ENCODE measurements at regions of chr1 and their contacts with region 1.

Region 1: GRCh38 chr1:87348341-87348999 is 19.8 kb downstream of the LMO4 start:
- DNase-seq: no peak
- H3K4me3 ChIP-seq: no peak overlapping the region
- H3K27ac ChIP-seq: no peak overlapping the region
- H3K4me1 ChIP-seq: no peaks in the 10 kb centered on the region
- H3K27me3 ChIP-seq: no peaks in the 10 kb centered on the region
- CTCF ChIP-seq: no peak

Region 2: DNA sequence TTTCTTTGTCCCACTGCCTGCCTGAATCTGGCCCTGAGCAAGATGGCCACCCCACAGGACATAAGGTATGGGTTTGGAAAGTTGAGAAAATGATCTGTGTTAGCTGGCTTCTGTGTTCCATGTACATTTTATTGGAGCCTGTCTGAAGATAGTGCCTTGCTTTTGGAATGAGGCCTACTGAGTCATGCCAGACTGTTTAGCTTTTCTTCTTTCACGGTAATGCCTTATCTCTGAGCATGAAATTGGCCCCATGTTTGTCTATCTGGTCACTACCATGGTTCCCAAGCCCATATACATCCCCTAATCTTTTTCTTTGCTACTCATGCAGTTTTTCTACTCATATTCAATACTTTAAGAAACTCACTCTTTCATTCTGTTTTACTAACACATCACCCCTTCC is 104.9 kb before region 1 on chr1:
- CTCF ChIA-PET with region 1: no interaction called
- POLR2A ChIA-PET with region 1: no interaction called
- intact Hi-C with region 1: no loop called
- DNase-seq: no peak
- H3K4me3 ChIP-seq: no peak overlapping the region
- H3K27ac ChIP-seq: no peak overlapping the region
- H3K4me1 ChIP-seq: peaks cover 16% of the 10 kb centered on the region
- H3K27me3 ChIP-seq: no peaks in the 10 kb centered on the region
- CTCF ChIP-seq: no peak

Region 3: DNA sequence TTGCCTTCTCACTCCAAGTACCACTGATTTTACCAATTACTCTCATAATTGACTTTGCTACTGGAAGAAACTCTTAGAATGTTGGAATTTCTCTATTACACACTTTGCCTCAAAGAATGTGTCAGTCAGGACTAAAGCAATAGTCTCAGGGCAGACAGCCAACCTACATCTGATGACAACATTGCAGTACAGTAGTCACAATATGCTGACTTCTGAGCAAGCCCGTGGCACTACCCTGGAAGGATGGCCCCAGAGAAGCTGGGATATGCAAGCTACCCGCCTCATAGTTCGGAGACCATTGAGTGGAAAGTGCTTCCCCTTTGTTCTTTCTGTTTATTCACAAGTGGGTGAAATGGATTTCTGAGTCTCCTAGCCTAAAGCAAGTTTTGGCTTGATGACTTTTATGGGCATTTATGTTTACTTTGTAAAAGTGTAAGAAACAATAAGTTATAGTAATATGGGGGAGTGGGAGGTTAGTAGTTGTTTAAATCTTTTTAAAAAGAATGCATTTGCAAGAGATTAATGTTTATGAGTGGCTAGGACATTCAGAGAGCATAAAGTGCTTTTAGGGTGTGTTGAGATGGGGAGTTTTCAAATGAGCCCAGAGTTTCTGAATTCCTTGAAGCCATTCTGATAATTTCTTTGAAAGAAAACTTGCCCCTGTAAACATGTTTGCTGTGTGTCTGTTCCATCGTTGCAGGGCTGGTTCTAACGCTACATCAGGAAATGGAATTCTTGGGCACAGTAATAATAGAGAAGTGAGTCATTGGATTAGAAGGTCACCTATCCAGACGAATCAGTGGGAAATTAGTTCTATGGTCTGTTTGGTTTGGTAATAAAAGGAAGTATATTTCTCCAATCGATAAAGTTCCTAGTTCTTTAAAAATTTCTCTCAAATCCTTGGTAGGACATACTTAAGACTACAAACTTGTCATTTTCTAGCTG is 44.0 kb after region 1 on chr1:
- CTCF ChIA-PET with region 1: no interaction called
- POLR2A ChIA-PET with region 1: no interaction called
- intact Hi-C with region 1: loop called (anchors 5 kb)
- DNase-seq: peak; percentile 27 to 91
- H3K4me3 ChIP-seq: peak overlapping the region; percentile 11; the same call in 1 of the 2 replicates
- H3K27ac ChIP-seq: peak overlapping the region; percentile 50
- H3K4me1 ChIP-seq: peaks cover 24% of the 10 kb centered on the region
- H3K27me3 ChIP-seq: no peaks in the 10 kb centered on the region
- CTCF ChIP-seq: no peak

Region 4: DNA sequence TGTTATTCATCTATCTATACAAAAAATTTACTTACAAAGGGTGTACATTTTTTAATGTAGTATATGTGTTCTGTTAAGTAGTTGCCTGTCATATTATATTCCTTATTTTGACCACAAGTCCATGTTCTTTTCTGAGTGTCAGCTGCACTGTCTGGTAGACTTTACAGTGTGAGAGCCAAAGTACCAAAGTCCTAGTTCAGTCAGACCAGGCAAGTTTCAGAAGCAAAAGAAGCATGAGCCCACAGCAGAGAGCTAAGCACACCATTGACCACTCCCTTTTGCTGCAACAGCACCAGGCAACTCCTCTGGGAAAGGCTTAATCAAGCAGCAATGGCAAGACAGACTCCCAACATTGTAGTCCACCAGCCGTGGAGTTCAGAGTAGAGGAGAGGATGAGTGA is 703.7 kb after region 1 on chr1:
- CTCF ChIA-PET with region 1: no interaction called
- POLR2A ChIA-PET with region 1: no interaction called
- intact Hi-C with region 1: no loop called
- DNase-seq: no peak
- H3K4me3 ChIP-seq: no peak overlapping the region
- H3K27ac ChIP-seq: no peak overlapping the region
- H3K4me1 ChIP-seq: no peaks in the 10 kb centered on the region
- H3K27me3 ChIP-seq: no peaks in the 10 kb centered on the region
- CTCF ChIP-seq: no peak

Measured in PC-9 (cell line).